Breast epithelium (tissue), 4 donors: ENCODE measurements at regions of chr19 and their contacts with region 1.

Region 1: DNA sequence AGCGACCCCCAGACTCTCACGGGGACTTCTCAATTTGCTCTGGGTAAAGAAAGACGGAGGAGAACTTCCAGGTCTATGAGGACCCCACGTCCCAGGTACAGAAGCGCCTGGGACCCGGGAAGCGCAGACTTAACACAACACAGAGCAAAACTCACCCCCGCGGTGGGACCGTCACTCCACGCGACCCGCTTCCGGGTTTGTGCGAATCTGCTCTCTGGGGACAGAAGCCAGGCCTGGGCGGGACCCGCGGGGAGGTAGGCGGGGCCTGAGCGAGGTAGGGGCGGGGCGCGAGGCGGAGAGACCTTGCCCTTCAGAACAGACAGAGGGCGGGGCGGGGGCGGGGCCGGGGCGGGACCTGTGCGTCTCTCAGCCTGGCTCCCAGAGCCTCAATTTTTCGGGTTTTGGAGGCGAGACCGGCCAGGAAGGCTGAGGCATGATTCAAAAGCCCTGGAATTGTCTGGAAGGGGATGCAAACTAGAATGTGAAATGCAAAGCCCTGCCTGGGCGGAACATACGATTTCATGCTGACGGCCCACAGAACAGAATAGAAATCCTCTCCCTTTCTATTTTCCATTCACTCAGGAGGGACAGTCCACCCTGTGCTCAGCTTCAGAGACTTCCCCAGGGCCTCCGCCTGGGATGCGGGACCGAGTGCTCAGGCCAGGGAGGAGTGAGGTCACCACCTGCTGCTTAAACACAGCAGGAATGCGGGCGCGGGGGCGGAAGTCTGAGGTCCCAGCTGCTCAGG is 19.3 kb upstream of the ZNF888 start:
- DNase-seq: peak; percentile 96 to 97
- H3K4me3 ChIP-seq: peak overlapping the region; percentile 69 to 82 (median 73)
- H3K27ac ChIP-seq: peak overlapping the region; percentile 82 to 90
- H3K4me1 ChIP-seq: no peaks in the 10 kb centered on the region
- H3K27me3 ChIP-seq: no peaks in the 10 kb centered on the region
- CTCF ChIP-seq: no peak
- POLR2A ChIP-seq: peak; percentile 84

Region 2: DNA sequence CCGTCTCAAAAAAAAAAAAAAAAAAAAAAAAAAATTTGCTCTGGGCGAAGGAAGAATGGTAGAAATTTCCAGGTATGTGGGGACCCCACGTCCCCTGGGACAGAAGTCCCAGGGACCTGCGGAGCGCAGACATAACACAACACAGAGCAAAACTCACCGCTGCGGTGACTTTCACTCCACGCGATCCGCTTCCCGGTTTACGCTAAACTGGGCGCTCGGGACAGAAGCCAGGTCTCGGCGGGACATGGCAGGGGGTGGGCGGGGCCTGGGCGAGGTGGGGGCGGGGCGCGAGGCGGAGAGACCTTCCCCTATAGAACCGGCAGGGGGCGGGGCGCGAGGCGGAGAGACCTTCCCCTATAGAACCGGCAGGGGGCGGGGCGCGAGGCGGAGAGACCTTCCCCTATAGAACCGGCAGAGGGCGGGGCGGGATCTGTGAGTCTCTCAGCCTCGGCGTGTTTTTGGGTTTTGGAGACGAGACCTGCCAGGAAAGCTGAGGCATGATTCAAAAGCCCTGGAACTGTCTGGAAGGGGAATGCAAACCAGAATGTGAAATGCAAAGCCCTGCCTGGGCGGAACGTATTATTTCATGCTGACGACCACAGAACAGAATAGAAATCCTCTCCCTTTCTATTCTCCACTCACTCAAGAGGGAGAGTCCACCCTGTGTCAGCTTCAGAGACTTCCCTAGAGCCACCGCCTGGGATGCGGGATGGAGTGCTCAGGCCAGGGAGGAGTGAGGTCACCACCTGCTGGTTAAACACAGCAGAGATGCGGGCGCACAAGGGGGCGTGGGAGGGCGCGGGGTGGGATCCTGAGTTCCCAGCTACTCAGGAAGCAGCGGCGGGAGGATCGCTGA is 51.0 kb after region 1 on chr19:
- intact Hi-C with region 1: loop called (anchors 2 kb)
- DNase-seq: peak; percentile 73 to 77
- H3K4me3 ChIP-seq: peak overlapping the region; percentile 40 to 67 (median 58)
- H3K27ac ChIP-seq: peak overlapping the region; percentile 66 to 82
- H3K4me1 ChIP-seq: no peaks in the 10 kb centered on the region
- H3K27me3 ChIP-seq: no peaks in the 10 kb centered on the region
- CTCF ChIP-seq: peak; percentile 33 to 49 (median 47)
- POLR2A ChIP-seq: no peak